ENCODE measurements at regions of chr11 and their contacts with region 1.

Region 1: DNA sequence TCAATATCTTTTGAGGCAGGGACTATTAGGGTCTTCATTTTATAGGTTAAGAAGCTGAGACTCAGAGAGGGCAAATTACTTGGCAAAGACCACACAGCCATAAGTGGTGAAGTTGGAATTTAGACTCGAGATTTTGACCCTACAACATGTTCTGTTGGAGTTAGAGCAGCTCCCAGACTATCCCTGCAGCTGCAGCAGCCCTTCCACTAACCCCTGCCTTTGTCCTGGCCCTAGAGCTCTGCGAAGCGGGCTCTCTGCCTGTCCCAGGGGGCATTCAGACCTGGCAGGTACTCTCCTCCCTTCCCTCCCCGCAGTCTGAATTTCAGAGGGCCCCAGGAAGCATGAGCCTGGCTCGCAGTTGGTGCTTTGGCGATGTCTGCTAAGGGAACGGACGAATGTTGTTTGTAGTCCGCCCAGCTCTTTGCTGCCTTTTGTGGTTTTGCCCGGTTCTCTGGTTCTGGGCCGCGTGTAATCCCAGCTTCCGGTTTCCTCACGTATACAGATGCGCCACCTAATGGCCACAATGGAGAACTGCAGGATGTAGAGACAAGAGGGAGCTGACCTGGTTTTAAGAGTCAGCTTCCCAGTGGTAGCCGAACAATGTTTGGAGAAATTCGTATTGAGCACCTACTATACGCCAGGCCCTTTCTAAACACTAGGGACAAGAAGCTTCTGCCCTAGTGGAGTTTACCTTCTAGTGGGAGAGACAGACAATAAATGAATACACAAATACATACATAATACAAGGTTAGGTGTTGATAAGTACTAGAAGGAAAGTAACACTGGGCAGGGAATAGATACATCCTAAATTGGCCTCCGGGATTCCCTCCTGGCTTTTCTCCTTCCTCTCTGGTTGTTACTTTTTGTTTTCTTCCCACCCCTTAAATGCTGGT is 125.2 kb downstream of the ST3GAL4 start:
- DNase-seq: peak; percentile 81 to 90 (median 85)
- H3K4me3 ChIP-seq: no peak overlapping the region
- H3K27ac ChIP-seq: peak overlapping the region; percentile 14 to 60
- H3K4me1 ChIP-seq: peaks cover 1% of the 10 kb centered on the region
- H3K27me3 ChIP-seq: no peaks in the 10 kb centered on the region
- CTCF ChIP-seq: peak; percentile 93 to 97 (median 96)
- EP300 ChIP-seq: no peak
- POLR2A ChIP-seq: no peak

Region 2: GRCh38 chr11:126310228-126310991 is 170.2 kb before region 1 on chr11:
- intact Hi-C with region 1: loop called (anchors 2 to 5 kb)
- DNase-seq: peak; percentile 78 to 87 (median 87)
- H3K4me3 ChIP-seq: no peak overlapping the region
- H3K27ac ChIP-seq: no peak overlapping the region
- H3K4me1 ChIP-seq: peaks cover 2% of the 10 kb centered on the region
- H3K27me3 ChIP-seq: no peaks in the 10 kb centered on the region
- CTCF ChIP-seq: peak; percentile 83 to 94 (median 92)
- EP300 ChIP-seq: no peak
- POLR2A ChIP-seq: no peak

Region 3: DNA sequence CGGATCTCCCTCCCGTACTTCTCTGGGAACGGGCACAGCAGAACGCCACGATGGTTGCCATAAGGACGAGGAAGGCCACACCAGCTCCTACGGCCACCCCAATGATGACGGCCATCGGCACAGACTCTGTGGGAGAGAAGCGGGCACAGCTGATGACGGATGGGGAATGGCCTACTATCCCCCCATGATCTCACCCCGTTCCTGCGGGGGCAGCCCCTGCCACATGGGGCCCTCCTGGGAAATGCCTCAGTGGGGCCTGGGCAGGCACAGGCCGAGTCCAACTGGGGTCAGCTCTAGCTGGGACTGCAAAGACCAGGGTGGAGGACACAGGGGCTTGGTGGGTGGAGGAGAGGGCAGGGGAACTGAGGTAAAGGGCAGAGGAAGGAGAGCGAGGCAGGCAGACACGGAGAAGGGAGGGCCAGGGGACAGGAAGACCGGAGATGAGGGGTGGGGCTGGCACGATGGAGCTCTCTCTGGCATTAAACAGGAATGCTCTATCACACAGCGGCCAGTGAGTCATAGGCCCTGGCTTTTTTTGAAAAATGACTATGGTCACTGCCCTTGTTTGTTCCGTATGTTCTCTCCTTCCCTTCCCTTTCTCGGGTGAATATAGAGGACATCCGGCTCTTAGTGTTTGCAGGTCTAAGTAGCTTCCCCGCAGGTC is 49.1 kb before region 1 on chr11:
- intact Hi-C with region 1: loop called in 1 of 4 experiments (anchors 5 kb)
- DNase-seq: peak; percentile 66 to 82 (median 72)
- H3K4me3 ChIP-seq: no peak overlapping the region
- H3K27ac ChIP-seq: peak overlapping the region; percentile 50 to 70
- H3K4me1 ChIP-seq: peaks cover 36% of the 10 kb centered on the region
- H3K27me3 ChIP-seq: no peaks in the 10 kb centered on the region
- CTCF ChIP-seq: no peak
- EP300 ChIP-seq: no peak
- POLR2A ChIP-seq: no peak

Region 4: DNA sequence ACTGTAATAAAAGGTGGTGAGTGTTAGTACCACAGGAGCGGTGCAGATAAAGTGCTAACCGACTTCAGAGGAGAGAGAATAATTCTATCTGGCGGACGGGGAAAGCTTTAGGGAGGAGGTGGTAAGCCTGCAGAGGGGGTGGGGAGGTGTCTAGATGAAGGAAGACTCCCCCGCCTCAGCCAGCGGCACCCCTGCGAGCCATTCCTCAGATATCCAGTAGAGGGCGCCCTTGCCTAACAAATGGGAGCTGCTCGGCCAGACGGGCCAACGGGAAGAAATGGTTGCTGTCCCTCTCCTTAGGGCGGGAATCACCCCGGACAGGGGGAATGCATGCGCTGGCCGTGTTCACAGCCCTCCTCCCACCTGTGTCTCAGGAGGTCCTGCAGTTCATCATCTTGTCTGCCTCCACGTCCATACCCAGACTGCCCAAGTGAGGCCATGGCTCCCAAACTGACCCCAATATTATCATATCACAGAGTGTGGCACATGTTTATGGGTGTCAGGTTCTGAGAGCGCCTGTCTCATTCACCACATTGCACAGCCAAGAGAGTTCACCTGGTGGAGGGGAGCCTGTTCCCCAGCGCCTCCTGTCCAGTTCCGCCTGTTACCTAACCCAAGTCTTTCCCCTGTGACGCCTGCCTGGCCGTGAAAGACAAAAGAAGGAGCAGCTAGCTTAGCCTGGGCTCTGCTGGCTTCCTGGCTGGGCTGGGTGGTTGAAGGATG is 39.7 kb before region 1 on chr11:
- intact Hi-C with region 1: loop called in 3 of 4 experiments (anchors 1 to 5 kb)
- DNase-seq: peak; percentile 84 to 94 (median 89)
- H3K4me3 ChIP-seq: no peak overlapping the region
- H3K27ac ChIP-seq: no peak overlapping the region
- H3K4me1 ChIP-seq: peaks cover 2% of the 10 kb centered on the region
- H3K27me3 ChIP-seq: no peaks in the 10 kb centered on the region
- CTCF ChIP-seq: peak; percentile 94 to 97 (median 95)
- EP300 ChIP-seq: no peak
- POLR2A ChIP-seq: peak; percentile 12

Region 5: GRCh38 chr11:126446581-126446980 is 34.1 kb before region 1 on chr11:
- intact Hi-C with region 1: loop called in 2 of 4 experiments (anchors 1 to 5 kb)
- DNase-seq: no peak
- H3K4me3 ChIP-seq: no peak overlapping the region
- H3K27ac ChIP-seq: no peak overlapping the region
- H3K4me1 ChIP-seq: peaks cover 5% of the 10 kb centered on the region
- H3K27me3 ChIP-seq: no peaks in the 10 kb centered on the region
- CTCF ChIP-seq: no peak
- EP300 ChIP-seq: no peak
- POLR2A ChIP-seq: no peak